Activated CD4-positive, alpha-beta memory T cell treated with anti-CD3 and anti-CD28 coated beads, Interleukin-2, amount 10 ng/mL, durations not matched to agents 7 days and 5 days (primary cell): ENCODE measurements at regions of chr2 and their contacts with region 1.

Region 1: DNA sequence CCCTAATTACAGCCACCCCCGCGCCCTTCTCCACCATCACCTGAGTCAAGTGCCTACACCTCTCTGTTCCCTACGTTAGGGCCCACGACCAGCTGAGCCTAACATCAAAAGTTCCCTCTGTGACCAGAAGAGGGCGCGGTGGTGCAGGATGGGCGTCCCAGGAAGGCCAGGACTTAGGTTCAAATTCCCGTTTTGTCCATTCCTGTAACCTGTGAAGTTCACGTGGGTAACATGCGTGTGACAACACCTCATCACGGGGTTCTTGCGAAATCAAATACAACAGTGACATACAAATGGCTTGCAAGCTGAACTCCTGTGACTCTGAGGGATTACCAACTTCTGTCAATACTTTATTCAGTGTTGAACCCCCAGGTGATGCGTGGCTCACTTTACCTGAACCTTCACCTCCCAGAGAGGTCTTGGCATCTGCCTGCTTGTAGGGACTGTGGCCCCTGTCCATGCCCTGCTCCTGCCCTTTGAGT is 207.9 kb downstream of the ARL4C start:
- DNase-seq: peak; percentile 83
- H3K4me3 Mint-ChIP-seq: peak overlapping the region; percentile 47
- H3K27ac Mint-ChIP-seq: peak overlapping the region; percentile 100
- H3K4me1 Mint-ChIP-seq: peaks cover 83% of the 10 kb centered on the region
- H3K27me3 Mint-ChIP-seq: no peaks in the 10 kb centered on the region

Region 2: GRCh38 chr2:234300932-234301823 is 12.2 kb after region 1 on chr2:
- CTCF ChIA-PET with region 1: interaction called, 33 read pairs
- POLR2A ChIA-PET with region 1: interaction called, 120 read pairs
- DNase-seq: no peak
- H3K4me3 Mint-ChIP-seq: no peak overlapping the region
- H3K27ac Mint-ChIP-seq: no peak overlapping the region
- H3K4me1 Mint-ChIP-seq: peaks cover 72% of the 10 kb centered on the region
- H3K27me3 Mint-ChIP-seq: no peaks in the 10 kb centered on the region

Region 3: GRCh38 chr2:234368861-234369261 is 79.8 kb after region 1 on chr2:
- CTCF ChIA-PET with region 1: interaction called, 17 read pairs
- POLR2A ChIA-PET with region 1: interaction called, 16 read pairs
- DNase-seq: peak; percentile 69
- H3K4me3 Mint-ChIP-seq: no peak overlapping the region
- H3K27ac Mint-ChIP-seq: peak overlapping the region; percentile 85
- H3K4me1 Mint-ChIP-seq: peaks cover 77% of the 10 kb centered on the region
- H3K27me3 Mint-ChIP-seq: no peaks in the 10 kb centered on the region

Region 4: GRCh38 chr2:234425619-234426603 is 136.9 kb after region 1 on chr2:
- CTCF ChIA-PET with region 1: interaction called, 77 read pairs
- POLR2A ChIA-PET with region 1: interaction called, 301 read pairs
- DNase-seq: peak; percentile 88
- H3K4me3 Mint-ChIP-seq: peak overlapping the region; percentile 57
- H3K27ac Mint-ChIP-seq: peak overlapping the region; percentile 99
- H3K4me1 Mint-ChIP-seq: peaks cover 85% of the 10 kb centered on the region
- H3K27me3 Mint-ChIP-seq: no peaks in the 10 kb centered on the region

Region 5: GRCh38 chr2:234463626-234464290 is 174.7 kb after region 1 on chr2:
- CTCF ChIA-PET with region 1: interaction called, 5 read pairs
- POLR2A ChIA-PET with region 1: interaction called, 196 read pairs
- DNase-seq: peak; percentile 78
- H3K4me3 Mint-ChIP-seq: peak overlapping the region; percentile 58
- H3K27ac Mint-ChIP-seq: peak overlapping the region; percentile 86
- H3K4me1 Mint-ChIP-seq: peaks cover 61% of the 10 kb centered on the region
- H3K27me3 Mint-ChIP-seq: no peaks in the 10 kb centered on the region

Region 6: GRCh38 chr2:234488913-234489451 is 200.0 kb after region 1 on chr2:
- CTCF ChIA-PET with region 1: interaction called, 103 read pairs
- POLR2A ChIA-PET with region 1: interaction called, 572 read pairs
- DNase-seq: peak; percentile 87
- H3K4me3 Mint-ChIP-seq: peak overlapping the region; percentile 99
- H3K27ac Mint-ChIP-seq: peak overlapping the region; percentile 100
- H3K4me1 Mint-ChIP-seq: peaks cover 73% of the 10 kb centered on the region
- H3K27me3 Mint-ChIP-seq: no peaks in the 10 kb centered on the region